Tibial artery (tissue), 4 donors: ENCODE measurements at regions of chr17 and their contacts with region 1.

Region 1: GRCh38 chr17:65055348-65056261 is 935 bp downstream of the GNA13 start:
- DNase-seq: peak; percentile 79 to 87
- H3K4me3 ChIP-seq: peak overlapping the region; percentile 97 to 98
- H3K27ac ChIP-seq: peak overlapping the region; percentile 98
- H3K4me1 ChIP-seq: peaks cover 0 to 46% (median 27%) of the 10 kb centered on the region in 4 donors
- H3K27me3 ChIP-seq: no peaks in the 10 kb centered on the region
- CTCF ChIP-seq: peak in 1 of 2 experiments; percentile 11

Region 2: GRCh38 chr17:64975329-64976087 is 80.1 kb before region 1 on chr17:
- intact Hi-C with region 1: loop called (anchors 1 kb)
- DNase-seq: peak; percentile 91 to 97
- H3K4me3 ChIP-seq: peak overlapping the region; percentile 80 to 95
- H3K27ac ChIP-seq: peak overlapping the region; percentile 99
- H3K4me1 ChIP-seq: peaks cover 0 to 20% (median 12%) of the 10 kb centered on the region in 4 donors
- H3K27me3 ChIP-seq: no peaks in the 10 kb centered on the region
- CTCF ChIP-seq: peak in 1 of 2 experiments; percentile 19

Region 3: DNA sequence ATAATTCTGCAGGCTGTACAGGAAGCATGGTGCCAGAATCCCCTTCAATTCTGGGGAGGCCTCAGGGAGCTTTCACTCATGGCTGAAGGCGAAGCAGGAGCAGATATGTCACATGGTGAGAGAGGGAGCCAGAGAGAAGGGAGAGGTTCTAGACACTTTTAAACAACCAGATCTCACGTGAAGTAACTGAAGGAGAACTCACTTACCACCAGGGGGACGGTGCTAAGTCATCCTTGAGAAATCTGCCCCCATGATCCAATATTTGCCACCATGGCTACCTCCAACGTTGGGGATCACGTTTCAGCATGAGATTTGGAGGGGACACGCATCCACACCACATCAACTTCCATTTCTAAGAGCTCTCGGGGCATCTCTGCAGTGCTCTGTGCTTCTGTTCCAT is 38.3 kb after region 1 on chr17:
- intact Hi-C with region 1: no loop called
- DNase-seq: no peak
- H3K4me3 ChIP-seq: no peak overlapping the region
- H3K27ac ChIP-seq: no peak overlapping the region
- H3K4me1 ChIP-seq: no peaks in the 10 kb centered on the region
- H3K27me3 ChIP-seq: no peaks in the 10 kb centered on the region
- CTCF ChIP-seq: no peak

Region 4: GRCh38 chr17:65742403-65743307 is 687.0 kb after region 1 on chr17:
- intact Hi-C with region 1: no loop called
- DNase-seq: no peak
- H3K4me3 ChIP-seq: no peak overlapping the region
- H3K27ac ChIP-seq: no peak overlapping the region
- H3K4me1 ChIP-seq: peaks cover 0 to 18% (median 8%) of the 10 kb centered on the region in 4 donors
- H3K27me3 ChIP-seq: no peaks in the 10 kb centered on the region
- CTCF ChIP-seq: no peak